ENCODE measurements at regions of chr16 and their contacts with region 1.

Region 1: GRCh38 chr16:88023786-88024185 is 72.6 kb downstream of the BANP start:
- DNase-seq: no peak
- H3K4me3 ChIP-seq: no peak overlapping the region
- CTCF ChIP-seq: no peak

Region 2: DNA sequence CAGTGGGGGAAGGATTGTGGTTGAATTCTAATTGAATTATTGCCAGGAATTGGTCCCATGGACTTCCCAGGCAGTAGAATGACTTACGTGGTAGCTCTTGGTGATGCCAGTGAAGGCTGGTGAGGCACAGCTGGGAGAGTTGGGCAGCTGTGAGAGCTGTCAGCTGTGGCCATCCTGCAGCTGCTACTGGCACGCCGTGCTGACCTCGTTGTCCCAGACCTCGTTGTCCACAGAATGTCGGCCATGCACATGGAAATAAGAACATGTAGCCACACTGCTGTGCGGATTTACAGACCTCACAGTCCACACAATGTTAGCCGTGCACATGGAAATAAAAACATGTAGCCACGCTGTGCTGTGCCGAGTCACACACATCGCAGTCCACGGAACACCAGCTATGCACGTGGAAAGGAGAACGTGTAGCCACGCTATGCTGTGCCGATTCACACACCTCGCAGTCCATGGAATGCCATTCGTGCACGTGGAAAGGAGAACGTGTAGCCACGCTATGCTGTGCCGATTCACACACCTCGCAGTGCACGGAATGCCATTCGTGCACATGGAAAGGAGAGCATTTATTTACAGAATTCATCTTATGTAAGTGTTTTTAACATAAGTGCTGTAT is 13.3 kb before region 1 on chr16:
- CTCF ChIA-PET with region 1: interaction called, 16 read pairs
- POLR2A ChIA-PET with region 1: no interaction called
- DNase-seq: no peak
- H3K4me3 ChIP-seq: no peak overlapping the region
- CTCF ChIP-seq: no peak

Region 3: GRCh38 chr16:88035292-88035691 is 11.5 kb after region 1 on chr16:
- CTCF ChIA-PET with region 1: no interaction called
- POLR2A ChIA-PET with region 1: no interaction called
- DNase-seq: no peak
- H3K4me3 ChIP-seq: no peak overlapping the region
- CTCF ChIP-seq: no peak

Region 4: GRCh38 chr16:88045820-88046303 is 22.1 kb after region 1 on chr16:
- CTCF ChIA-PET with region 1: no interaction called
- POLR2A ChIA-PET with region 1: no interaction called
- DNase-seq: no peak
- H3K4me3 ChIP-seq: no peak overlapping the region
- CTCF ChIP-seq: no peak

Region 5: DNA sequence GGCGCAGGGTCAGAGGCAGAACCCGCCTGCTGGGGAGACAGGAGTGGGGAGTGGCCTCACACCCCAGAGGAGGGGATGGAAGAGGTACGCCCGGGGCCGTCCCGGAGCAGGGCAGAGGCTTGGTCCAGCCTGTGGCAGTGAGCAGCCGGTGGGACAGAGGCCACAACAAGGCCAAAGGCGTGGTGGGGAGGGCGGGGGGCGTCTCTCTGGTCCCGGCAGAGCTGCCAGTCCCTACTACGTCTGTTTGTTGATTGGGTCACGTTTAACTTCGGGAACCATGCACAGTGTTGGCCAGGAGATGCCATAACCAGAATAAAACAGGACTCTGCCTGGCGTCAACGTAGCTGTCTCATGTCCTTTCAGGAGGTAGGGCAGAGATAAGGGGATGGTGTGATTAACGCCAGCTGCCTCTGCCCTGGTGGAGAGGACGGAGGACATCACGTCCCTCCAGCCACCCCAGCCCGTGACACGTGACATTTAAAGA is 120.3 kb after region 1 on chr16:
- CTCF ChIA-PET with region 1: no interaction called
- POLR2A ChIA-PET with region 1: no interaction called
- DNase-seq: no peak
- H3K4me3 ChIP-seq: no peak overlapping the region
- CTCF ChIP-seq: no peak